ENCODE measurements at regions of chrX and their contacts with region 1.

Region 1: GRCh38 chrX:41412261-41413081 is 34.7 kb upstream of the NYX start:
- DNase-seq: peak in 1 of 2 experiments; percentile 31
- H3K4me3 ChIP-seq: no peak overlapping the region
- H3K4me3 Mint-ChIP-seq: no peak overlapping the region
- H3K27ac Mint-ChIP-seq: no peak overlapping the region
- H3K4me1 ChIP-seq: no peaks in the 10 kb centered on the region
- H3K4me1 Mint-ChIP-seq: no peaks in the 10 kb centered on the region
- H3K27me3 ChIP-seq: no peaks in the 10 kb centered on the region
- H3K27me3 Mint-ChIP-seq: no peaks in the 10 kb centered on the region
- CTCF ChIP-seq: no peak

Region 2: GRCh38 chrX:41369152-41369551 is 43.3 kb before region 1 on chrX:
- CTCF ChIA-PET with region 1: no interaction called
- POLR2A ChIA-PET with region 1: no interaction called
- intact Hi-C with region 1: no loop called
- DNase-seq: no peak
- H3K4me3 ChIP-seq: no peak overlapping the region
- H3K4me3 Mint-ChIP-seq: no peak overlapping the region
- H3K27ac Mint-ChIP-seq: no peak overlapping the region
- H3K4me1 ChIP-seq: no peaks in the 10 kb centered on the region
- H3K4me1 Mint-ChIP-seq: no peaks in the 10 kb centered on the region
- H3K27me3 ChIP-seq: no peaks in the 10 kb centered on the region
- H3K27me3 Mint-ChIP-seq: no peaks in the 10 kb centered on the region
- CTCF ChIP-seq: no peak

Region 3: DNA sequence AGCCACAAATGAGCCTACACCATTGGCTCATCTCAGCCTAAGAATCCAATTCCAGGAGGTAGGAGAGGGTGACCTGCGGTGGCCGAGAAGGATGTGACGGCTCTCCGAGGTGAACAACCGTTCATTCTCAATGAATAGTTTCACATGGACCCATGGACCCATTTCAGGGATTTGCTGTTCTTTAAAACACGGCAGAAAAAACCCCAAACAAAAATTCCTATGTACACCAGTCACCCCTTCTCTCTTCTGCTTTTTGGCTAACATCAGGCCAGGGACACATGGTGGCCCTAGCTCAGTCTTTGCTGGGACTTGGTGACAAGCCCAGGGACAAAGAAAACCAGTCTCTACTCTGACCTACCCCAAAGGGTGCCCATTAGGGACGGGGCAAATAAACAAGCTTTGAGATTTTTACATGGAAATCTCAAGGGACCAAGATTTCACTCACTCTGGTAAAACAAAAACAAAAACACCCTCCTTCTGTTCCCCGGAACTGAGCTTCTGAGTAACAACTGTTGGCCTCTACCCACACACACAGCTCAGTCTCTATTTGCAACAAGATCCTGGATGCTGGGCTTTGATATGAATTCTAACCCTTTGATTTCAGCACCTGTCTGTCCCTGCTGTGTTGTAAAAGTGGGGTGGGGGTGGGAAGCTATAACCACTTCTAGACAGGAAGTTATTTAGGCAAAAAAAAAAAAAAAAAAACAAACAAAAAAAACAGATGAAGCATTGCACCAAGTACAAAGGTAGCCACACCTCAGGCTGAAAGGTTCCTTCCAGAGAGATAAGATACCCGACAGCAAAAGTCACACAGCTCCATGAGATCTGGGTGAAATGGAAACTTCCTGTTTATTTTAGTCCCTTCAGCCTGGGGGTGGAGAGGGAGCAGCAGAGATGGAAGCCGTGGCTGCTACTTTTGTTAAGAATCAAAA is 29.5 kb before region 1 on chrX:
- CTCF ChIA-PET with region 1: no interaction called
- POLR2A ChIA-PET with region 1: interaction called, 12 read pairs
- intact Hi-C with region 1: no loop called
- DNase-seq: peak; percentile 45 to 64
- H3K4me3 ChIP-seq: no peak overlapping the region; the same call in 1 of the 2 replicates
- H3K4me3 Mint-ChIP-seq: peak overlapping the region; percentile 64
- H3K27ac Mint-ChIP-seq: peak overlapping the region; percentile 75
- H3K4me1 ChIP-seq: peaks cover 13% of the 10 kb centered on the region
- H3K4me1 Mint-ChIP-seq: peaks cover 4% of the 10 kb centered on the region
- H3K27me3 ChIP-seq: no peaks in the 10 kb centered on the region
- H3K27me3 Mint-ChIP-seq: no peaks in the 10 kb centered on the region
- CTCF ChIP-seq: no peak

Region 4: DNA sequence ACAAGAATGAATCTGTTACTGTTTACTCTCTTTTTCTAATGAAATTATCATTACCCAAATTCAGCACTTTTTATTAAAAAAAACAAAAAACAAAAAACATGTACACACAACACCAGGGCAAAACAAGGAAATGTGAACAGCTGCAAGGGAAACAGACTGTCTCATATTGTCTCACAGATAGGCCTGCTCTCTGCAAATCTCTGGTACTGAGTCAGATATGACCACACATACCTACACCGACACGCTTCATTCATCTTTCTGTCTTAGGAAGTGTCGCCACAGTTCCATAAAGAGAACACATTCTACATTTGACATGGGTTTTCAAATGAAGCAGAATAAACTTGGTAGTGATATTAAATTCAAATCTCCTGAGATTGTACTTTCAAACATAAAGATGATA is 184.1 kb after region 1 on chrX:
- CTCF ChIA-PET with region 1: no interaction called
- POLR2A ChIA-PET with region 1: no interaction called
- intact Hi-C with region 1: no loop called
- DNase-seq: no peak
- H3K4me3 ChIP-seq: no peak overlapping the region
- H3K4me3 Mint-ChIP-seq: no peak overlapping the region
- H3K27ac Mint-ChIP-seq: no peak overlapping the region
- H3K4me1 ChIP-seq: no peaks in the 10 kb centered on the region; the same call in 1 of the 2 replicates
- H3K4me1 Mint-ChIP-seq: no peaks in the 10 kb centered on the region
- H3K27me3 ChIP-seq: no peaks in the 10 kb centered on the region
- H3K27me3 Mint-ChIP-seq: no peaks in the 10 kb centered on the region
- CTCF ChIP-seq: no peak

Measured in Caco-2 (cell line).